Right cardiac atrium (tissue), 5 donors: ENCODE measurements at regions of chr4 and their contacts with region 1.

Region 1: DNA sequence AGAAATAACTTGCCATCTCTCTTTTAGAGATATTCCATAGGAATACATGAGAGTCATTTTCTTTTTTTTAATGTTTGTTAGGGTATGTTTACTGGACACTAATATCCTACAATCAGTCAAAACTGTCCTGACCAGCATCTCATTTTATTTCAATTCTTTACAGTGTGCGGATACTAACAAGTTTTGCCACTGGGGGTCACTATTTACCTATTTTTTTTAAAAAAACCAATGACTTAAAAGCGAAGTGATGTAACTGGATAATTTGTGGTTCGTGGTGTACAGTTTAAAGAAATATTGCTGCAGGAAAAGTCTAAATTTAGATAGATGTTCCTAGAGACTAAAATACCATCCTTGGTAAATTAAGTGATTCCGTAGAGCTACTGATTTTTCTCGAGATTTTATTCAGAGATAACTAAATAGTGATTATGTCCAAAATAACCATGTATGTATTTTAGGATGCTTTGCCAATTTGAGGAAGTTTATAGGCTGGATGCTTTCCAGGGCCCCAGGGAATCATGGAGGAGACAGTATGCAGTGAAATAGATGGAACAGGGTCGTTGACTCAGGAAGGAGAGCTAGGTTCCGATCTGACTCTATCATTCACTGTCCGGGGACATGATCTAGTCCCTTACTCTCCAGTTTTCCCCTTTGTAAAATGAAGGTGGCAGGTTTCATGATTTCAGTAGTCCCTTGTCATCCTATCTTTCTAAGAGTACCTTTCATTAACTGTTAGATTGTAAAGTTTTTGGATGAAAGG is 34.0 kb upstream of the GNPDA2 start:
- DNase-seq: no peak
- ATAC-seq: peak; percentile 50 to 51
- H3K4me3 ChIP-seq: no peak overlapping the region
- H3K27ac ChIP-seq: no peak overlapping the region
- H3K4me1 ChIP-seq: no peaks in the 10 kb centered on the region
- H3K27me3 ChIP-seq: no peaks in the 10 kb centered on the region

Region 2: DNA sequence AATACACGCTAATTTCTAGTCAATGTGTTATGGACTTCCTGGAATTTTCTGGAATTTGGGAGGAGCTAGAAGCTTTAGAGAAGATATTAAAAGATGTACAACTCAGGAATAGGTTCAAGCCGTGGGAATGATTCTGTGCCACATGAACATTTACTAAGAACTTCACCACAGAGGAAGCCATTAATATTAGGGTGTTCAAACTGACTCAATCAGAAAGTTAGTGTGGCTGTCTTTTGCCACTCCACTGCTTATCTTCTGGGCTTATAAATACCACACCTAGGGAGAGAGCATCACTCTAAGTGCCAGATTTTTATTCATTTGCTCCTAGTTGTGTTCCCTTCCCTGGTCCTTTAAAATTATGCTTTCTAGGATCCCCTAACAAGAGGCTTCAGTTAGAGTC is 721.5 kb before region 1 on chr4:
- intact Hi-C with region 1: no loop called
- DNase-seq: no peak
- ATAC-seq: no peak
- H3K4me3 ChIP-seq: no peak overlapping the region
- H3K27ac ChIP-seq: no peak overlapping the region
- H3K4me1 ChIP-seq: no peaks in the 10 kb centered on the region
- H3K27me3 ChIP-seq: no peaks in the 10 kb centered on the region

Region 3: GRCh38 chr4:44354172-44354571 is 406.1 kb before region 1 on chr4:
- intact Hi-C with region 1: no loop called
- DNase-seq: no peak
- ATAC-seq: no peak
- H3K4me3 ChIP-seq: no peak overlapping the region
- H3K27ac ChIP-seq: no peak overlapping the region
- H3K4me1 ChIP-seq: no peaks in the 10 kb centered on the region
- H3K27me3 ChIP-seq: no peaks in the 10 kb centered on the region

Region 4: DNA sequence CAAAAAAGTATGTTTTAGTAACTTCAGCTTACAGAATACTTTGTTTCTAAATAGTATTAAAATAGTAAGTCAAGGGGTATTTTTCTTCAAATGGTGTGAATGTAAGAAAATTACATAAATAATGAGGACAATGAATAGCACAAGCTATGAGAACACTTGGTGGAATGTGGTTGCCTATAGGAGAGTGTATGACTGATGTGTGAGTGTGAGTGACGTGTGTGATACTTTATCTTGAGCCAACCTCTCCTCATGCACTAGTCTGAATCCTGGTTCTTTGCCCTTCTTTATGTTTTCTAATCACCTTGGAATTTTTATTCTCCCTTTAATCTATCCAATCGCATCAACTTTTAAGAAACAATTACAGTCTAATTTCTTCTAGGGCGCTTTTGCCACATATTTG is 207.2 kb before region 1 on chr4:
- intact Hi-C with region 1: no loop called
- DNase-seq: no peak
- ATAC-seq: no peak
- H3K4me3 ChIP-seq: no peak overlapping the region
- H3K27ac ChIP-seq: no peak overlapping the region
- H3K4me1 ChIP-seq: no peaks in the 10 kb centered on the region
- H3K27me3 ChIP-seq: no peaks in the 10 kb centered on the region

Region 5: DNA sequence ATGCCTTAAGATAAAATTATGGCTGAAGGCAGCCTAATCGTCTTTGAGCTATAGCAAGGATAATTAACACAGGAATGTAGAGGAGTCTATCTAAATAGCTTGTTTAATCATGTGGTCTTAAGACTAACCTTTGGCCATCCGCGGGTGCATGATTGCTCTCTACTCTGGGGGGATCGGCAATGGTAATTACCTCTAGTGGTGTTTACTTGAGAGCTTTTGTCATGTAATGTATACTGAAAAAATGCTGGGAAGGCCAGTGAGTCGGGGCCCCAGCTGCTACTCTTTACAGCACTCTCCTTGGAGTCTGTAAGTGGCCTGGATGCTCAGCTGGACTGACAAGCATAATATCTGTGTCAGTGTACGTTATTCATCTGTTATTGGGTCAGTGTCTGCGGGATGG is 31.5 kb after region 1 on chr4:
- intact Hi-C with region 1: no loop called
- DNase-seq: no peak
- ATAC-seq: no peak
- H3K4me3 ChIP-seq: no peak overlapping the region
- H3K27ac ChIP-seq: no peak overlapping the region
- H3K4me1 ChIP-seq: no peaks in the 10 kb centered on the region
- H3K27me3 ChIP-seq: no peaks in the 10 kb centered on the region

Region 6: GRCh38 chr4:44927399-44928380 is 167.4 kb after region 1 on chr4:
- intact Hi-C with region 1: loop called in 1 of 4 experiments (anchors 10 kb)
- DNase-seq: no peak
- ATAC-seq: no peak
- H3K4me3 ChIP-seq: no peak overlapping the region
- H3K27ac ChIP-seq: no peak overlapping the region
- H3K4me1 ChIP-seq: no peaks in the 10 kb centered on the region
- H3K27me3 ChIP-seq: no peaks in the 10 kb centered on the region

Region 7: DNA sequence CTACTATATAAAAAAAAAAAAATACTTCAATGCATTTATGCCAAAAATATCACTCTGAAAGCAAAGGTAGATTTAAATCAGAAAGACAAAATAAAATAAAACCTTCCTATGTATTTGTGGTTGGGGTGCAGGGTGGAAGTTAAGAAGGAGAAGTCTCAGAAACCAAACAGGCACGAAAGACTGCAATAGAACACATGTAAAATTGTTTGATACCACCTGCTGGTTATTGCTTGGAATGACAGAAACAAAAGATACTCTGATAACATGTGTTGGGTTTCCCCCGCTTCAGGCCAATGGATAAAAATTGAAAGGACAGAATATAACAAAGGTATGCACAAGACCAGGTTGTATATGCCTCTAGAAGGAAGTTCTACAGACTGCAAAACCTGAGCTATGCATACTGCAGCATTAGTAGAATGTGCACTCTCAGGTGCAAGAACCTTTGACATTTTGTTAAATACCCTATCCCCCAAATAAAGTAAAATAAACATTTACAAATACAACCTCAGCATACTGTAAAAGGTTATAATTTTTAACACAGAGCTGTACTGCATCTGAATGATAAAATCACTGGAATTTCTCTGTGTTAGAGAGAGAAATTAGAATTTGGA is 1510.8 kb after region 1 on chr4:
- intact Hi-C with region 1: loop called in 2 of 4 experiments (anchors 10 kb)
- DNase-seq: no peak
- ATAC-seq: no peak
- H3K4me3 ChIP-seq: no peak overlapping the region
- H3K27ac ChIP-seq: no peak overlapping the region
- H3K4me1 ChIP-seq: no peaks in the 10 kb centered on the region
- H3K27me3 ChIP-seq: no peaks in the 10 kb centered on the region